Common myeloid progenitor, CD34-positive (primary cell): ENCODE measurements at regions of chr15 and their contacts with region 1.

Region 1: DNA sequence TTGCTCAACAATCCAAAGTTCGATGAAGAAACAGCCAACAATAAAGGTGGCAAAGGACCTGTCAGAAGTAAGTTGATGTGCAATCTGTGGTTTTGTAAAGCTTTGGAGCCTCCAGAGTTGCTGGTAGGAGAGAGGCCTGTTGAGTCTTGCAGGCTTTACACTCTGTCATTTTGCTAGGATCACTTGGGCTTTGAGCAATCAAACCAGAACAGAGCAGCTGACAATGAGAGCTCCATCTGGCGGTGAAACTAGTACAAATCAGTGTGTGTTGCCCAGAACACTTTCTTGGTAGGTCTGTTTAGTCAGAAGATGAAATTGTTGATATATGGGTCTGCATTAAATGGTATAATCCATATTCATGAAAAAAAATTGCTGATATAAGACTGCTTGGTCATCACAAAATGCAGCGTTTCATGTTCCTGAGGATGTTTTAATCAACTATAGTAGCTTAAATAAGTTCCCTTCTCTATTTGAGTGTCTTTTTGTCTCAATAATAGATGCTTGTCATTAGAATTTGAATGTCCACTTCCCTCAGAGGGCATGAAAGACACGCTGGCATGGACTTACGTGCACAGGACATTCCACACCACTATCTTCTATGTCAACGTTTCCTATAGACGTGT is 25.7 kb downstream of the TMOD2 start:
- DNase-seq: peak; percentile 79 to 90 (median 85)
- H3K4me3 ChIP-seq: no peak overlapping the region
- H3K27ac ChIP-seq: no peak overlapping the region
- H3K4me1 ChIP-seq: no peaks in the 10 kb centered on the region
- H3K27me3 ChIP-seq: no peaks in the 10 kb centered on the region

Region 2: GRCh38 chr15:49904296-49904695 is 1872.8 kb before region 1 on chr15:
- CTCF ChIA-PET with region 1: no interaction called
- POLR2A ChIA-PET with region 1: no interaction called
- DNase-seq: no peak
- H3K4me3 ChIP-seq: no peak overlapping the region
- H3K27ac ChIP-seq: no peak overlapping the region
- H3K4me1 ChIP-seq: peaks cover 0 to 12% (median 11%) of the 10 kb centered on the region in 4 experiments
- H3K27me3 ChIP-seq: no peaks in the 10 kb centered on the region

Region 3: DNA sequence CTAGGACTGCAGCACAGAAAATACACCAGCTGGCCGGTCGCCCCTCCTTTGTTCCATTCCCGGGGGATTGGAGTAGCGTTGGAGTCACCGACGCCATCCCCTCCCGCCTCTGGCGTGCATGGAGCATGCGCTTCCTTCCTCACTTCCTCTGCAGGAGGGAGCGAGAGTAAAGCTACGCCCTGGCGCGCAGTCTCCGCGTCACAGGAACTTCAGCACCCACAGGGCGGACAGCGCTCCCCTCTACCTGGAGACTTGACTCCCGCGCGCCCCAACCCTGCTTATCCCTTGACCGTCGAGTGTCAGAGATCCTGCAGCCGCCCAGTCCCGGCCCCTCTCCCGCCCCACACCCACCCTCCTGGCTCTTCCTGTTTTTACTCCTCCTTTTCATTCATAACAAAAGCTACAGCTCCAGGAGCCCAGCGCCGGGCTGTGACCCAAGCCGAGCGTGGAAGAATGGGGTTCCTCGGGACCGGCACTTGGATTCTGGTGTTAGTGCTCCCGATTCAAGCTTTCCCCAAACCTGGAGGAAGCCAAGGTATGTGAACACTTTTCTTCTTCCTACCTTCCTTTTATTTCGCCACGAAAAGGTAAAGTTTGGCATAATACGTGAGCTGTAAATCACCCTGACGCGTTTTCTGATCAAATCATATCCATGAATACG is 95.6 kb before region 1 on chr15 and contains the start of gene SCG3:
- CTCF ChIA-PET with region 1: interaction called, 16 read pairs
- POLR2A ChIA-PET with region 1: no interaction called
- DNase-seq: peak; percentile 61 to 79 (median 78)
- H3K4me3 ChIP-seq: peak within 1 kb of the TSS in 3 of 7 experiments; percentile 41 to 47 (median 45)
- H3K27ac ChIP-seq: no peak within 1 kb of the TSS
- H3K4me1 ChIP-seq: peaks cover 0 to 9% (median 6%) of the 10 kb centered on the region in 4 experiments
- H3K27me3 ChIP-seq: peaks cover 4 to 29% (median 14%) of the 10 kb centered on the region in 5 experiments

Region 4: DNA sequence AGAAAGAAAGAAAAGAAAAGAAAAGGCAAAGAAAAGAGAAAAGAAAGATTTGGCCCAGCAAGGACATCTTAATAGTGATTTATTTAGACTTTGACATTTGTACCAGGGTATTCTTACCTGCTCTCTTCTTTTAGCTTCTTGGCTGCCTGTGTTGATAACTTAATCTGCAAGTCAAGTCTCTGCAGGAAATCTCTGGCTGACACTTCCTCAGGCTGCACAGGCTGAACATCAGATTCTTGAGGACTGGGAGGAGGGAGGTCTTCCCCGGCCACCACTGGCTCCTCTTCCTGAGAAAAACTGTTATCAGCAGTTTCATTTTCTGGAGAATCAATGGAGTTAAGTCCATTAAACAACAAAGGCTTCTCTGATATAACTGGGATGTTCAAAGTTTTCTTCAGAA is 52.4 kb before region 1 on chr15:
- CTCF ChIA-PET with region 1: interaction called, 10 read pairs
- POLR2A ChIA-PET with region 1: no interaction called
- DNase-seq: peak in 1 of 3 donors; percentile 22
- H3K4me3 ChIP-seq: peak overlapping the region in 1 of 7 experiments; percentile 26
- H3K27ac ChIP-seq: no peak overlapping the region
- H3K4me1 ChIP-seq: peaks cover 9 to 53% (median 20%) of the 10 kb centered on the region in 4 experiments
- H3K27me3 ChIP-seq: no peaks in the 10 kb centered on the region

Region 5: GRCh38 chr15:51758645-51759044 is 18.4 kb before region 1 on chr15:
- CTCF ChIA-PET with region 1: interaction called, 28 read pairs
- POLR2A ChIA-PET with region 1: no interaction called
- DNase-seq: no peak
- H3K4me3 ChIP-seq: no peak overlapping the region
- H3K27ac ChIP-seq: no peak overlapping the region
- H3K4me1 ChIP-seq: peaks cover 0 to 26% (median 17%) of the 10 kb centered on the region in 4 experiments
- H3K27me3 ChIP-seq: peaks cover 0 to 1% (median 0%) of the 10 kb centered on the region in 5 experiments

Region 6: DNA sequence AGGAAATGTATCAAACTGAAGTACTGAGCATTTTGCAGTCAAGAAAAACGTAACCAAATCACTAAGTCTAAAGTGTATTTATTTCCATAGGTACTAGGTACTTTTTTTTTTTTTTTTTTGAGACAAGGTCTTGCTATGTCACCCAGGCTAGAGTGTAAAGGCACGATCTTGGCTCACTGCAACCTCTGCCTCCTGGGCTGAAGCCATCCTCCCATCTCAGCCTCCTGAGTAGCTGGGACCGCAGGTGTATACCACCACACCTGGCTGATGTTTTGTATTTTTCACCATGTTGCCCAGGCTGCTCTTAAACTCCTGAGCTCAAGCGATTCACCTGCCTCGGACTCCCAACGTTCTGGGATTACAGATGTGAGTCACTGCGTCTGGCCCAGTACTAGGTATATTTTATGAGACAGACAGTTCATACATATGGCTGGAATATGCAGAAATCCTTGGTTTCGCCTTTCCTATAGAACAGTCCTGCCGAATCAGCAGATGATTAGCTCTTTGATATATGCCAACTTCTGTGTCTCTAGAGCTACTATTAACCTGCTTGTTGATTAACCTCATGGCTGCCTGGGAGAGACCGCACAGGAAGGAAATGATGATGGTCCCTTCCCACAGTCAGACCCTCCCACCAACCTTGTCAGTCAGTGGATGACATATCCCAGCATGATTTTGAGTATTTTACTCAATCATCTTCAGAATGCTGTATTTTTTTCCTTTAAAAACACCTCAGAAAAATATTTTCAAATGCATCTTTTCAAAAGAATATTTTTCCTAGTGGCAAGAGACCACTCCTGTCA is 84.7 kb after region 1 on chr15:
- CTCF ChIA-PET with region 1: no interaction called
- POLR2A ChIA-PET with region 1: no interaction called
- DNase-seq: peak; percentile 65 to 82 (median 65)
- H3K4me3 ChIP-seq: no peak overlapping the region
- H3K27ac ChIP-seq: peak overlapping the region in 1 of 2 experiments; percentile 26
- H3K4me1 ChIP-seq: peaks cover 4 to 13% (median 8%) of the 10 kb centered on the region in 4 experiments
- H3K27me3 ChIP-seq: no peaks in the 10 kb centered on the region

Region 7: GRCh38 chr15:51884041-51884440 is 107.0 kb after region 1 on chr15:
- CTCF ChIA-PET with region 1: no interaction called
- POLR2A ChIA-PET with region 1: no interaction called
- DNase-seq: no peak
- H3K4me3 ChIP-seq: no peak overlapping the region
- H3K27ac ChIP-seq: no peak overlapping the region
- H3K4me1 ChIP-seq: peaks cover 0 to 14% (median under 1%) of the 10 kb centered on the region in 4 experiments
- H3K27me3 ChIP-seq: no peaks in the 10 kb centered on the region